ENCODE measurements at regions of chr13 and their contacts with region 1.

Region 1: GRCh38 chr13:96967248-96967745 is 27.0 kb downstream of the OXGR1 start:
- DNase-seq: peak; percentile 60 to 64
- H3K4me3 ChIP-seq: peak overlapping the region; percentile 11; the same call in 1 of the 2 replicates
- H3K4me1 ChIP-seq: peaks cover 8% of the 10 kb centered on the region
- H3K27me3 ChIP-seq: no peaks in the 10 kb centered on the region

Region 2: GRCh38 chr13:96020155-96020575 is 947.1 kb before region 1 on chr13:
- in situ Hi-C with region 1: loop called (anchors 10 kb)
- DNase-seq: peak; percentile 59 to 81
- H3K4me3 ChIP-seq: no peak overlapping the region
- H3K4me1 ChIP-seq: peaks cover 4% of the 10 kb centered on the region; the same call in 1 of the 2 replicates
- H3K27me3 ChIP-seq: no peaks in the 10 kb centered on the region

Region 3: DNA sequence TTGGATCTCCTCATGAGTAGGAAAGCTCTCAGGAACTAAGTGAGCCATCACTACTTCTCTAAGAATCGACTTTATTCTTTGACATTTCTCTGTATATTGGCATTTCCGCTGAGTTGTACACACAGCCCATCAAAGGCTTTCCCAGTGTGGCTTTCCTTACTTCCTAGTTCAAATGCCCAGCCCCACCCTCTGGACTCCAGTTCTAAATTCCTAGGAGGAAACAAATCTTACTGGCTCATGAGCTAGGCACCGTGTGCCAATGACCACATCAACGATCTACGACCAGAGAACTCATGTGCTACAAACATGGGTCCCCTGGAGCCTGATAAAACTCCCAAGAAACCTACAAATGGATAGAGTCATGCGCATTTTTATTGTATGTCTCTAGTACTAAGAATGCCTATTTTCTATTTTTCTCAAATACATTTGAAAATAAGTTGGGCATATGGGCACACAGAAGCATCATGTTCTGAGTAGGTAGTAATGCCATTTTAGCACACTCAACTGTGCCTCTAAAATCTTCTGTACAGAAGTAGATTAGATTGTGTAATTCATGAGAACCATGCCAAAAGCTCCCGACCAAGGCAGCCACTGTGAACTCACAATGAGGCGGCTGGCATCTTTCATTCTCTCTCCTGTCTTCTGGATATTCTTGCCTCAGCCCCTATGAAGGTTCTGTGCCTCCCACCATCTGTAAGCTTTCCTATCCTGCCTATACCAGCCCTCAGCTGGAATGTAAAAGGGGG is 456.2 kb after region 1 on chr13:
- in situ Hi-C with region 1: no loop called
- DNase-seq: no peak
- H3K4me3 ChIP-seq: no peak overlapping the region
- H3K4me1 ChIP-seq: no peaks in the 10 kb centered on the region; the same call in 1 of the 2 replicates
- H3K27me3 ChIP-seq: peaks cover 13% of the 10 kb centered on the region; the same call in 1 of the 2 replicates